CD4-positive, alpha-beta memory T cell (primary cell): ENCODE measurements at regions of chr15 and their contacts with region 1.

Region 1: DNA sequence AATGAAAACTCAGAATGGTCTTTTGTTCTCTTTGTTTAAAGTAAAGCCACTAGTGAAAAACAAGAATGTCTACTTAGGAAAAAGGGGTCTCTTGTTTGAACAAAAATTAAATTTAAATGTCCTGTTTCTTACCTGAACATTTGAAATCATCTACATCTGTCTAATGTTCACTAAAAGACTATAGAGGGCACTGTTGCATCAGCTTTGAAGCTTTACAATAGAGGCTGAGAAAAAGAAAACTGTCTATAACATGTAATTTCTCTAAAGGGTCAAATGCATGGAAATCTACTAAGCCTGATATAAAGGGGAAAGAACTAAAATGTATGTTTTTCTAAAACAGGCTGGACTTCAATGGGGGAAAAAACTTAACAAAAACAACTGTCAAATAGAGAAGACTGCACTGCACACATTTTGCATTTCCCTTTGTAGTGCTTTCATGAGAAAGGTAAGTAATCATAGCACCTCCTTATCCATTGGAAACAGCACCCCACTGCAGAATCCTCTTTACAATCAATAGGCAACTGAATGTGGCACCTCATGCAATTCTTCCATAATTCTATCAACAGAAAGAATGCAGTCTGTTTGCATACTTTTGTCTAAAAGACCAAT is 26.3 kb downstream of the DPH6 start:
- DNase-seq: peak in 4 of 5 donors; percentile 29 to 36 (median 33)
- H3K4me3 ChIP-seq: no peak overlapping the region
- H3K4me3 Mint-ChIP-seq: no peak overlapping the region
- H3K27ac ChIP-seq: no peak overlapping the region
- H3K27ac Mint-ChIP-seq: no peak overlapping the region
- H3K4me1 ChIP-seq: no peaks in the 10 kb centered on the region
- H3K4me1 Mint-ChIP-seq: peaks cover 0 to 8% (median 4%) of the 10 kb centered on the region in 4 donors
- H3K27me3 ChIP-seq: no peaks in the 10 kb centered on the region
- H3K27me3 Mint-ChIP-seq: no peaks in the 10 kb centered on the region

Region 2: GRCh38 chr15:35410774-35411173 is 108.9 kb before region 1 on chr15:
- CTCF ChIA-PET with region 1: no interaction called
- POLR2A ChIA-PET with region 1: no interaction called
- intact Hi-C with region 1: no loop called
- DNase-seq: no peak
- H3K4me3 ChIP-seq: no peak overlapping the region
- H3K4me3 Mint-ChIP-seq: no peak overlapping the region
- H3K27ac ChIP-seq: no peak overlapping the region
- H3K27ac Mint-ChIP-seq: no peak overlapping the region
- H3K4me1 ChIP-seq: no peaks in the 10 kb centered on the region
- H3K4me1 Mint-ChIP-seq: no peaks in the 10 kb centered on the region
- H3K27me3 ChIP-seq: no peaks in the 10 kb centered on the region
- H3K27me3 Mint-ChIP-seq: no peaks in the 10 kb centered on the region

Region 3: DNA sequence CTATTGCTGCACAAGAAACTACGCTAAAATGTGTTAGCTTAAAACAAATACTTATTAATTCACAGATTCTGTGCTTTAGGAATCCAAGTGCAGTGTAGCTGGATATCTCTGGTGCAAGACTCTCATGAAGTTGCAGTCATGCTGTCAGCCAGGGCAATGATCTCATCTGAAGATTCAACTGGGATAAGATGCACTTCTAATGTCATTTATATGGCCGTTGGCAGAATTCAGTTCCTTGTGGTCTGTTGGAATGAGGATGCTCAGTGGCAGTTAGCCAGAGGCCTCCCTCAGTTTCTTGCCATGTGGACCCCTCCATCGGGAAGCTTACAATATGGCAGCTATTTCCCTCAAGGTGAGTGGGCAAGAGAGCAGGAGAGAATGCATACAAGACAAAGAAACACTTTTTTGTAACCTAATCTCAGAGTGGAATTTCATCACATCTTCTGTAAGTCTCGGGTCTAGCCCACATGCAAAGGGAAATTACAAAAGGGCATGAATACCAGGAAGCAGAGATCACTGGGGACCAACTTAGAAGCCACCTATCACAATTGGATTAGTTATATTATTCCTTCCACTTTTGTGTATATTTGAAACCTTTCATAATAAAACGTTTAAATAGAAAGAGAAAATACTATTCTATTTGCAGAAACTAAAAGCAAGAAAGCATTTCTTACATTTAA is 35.2 kb before region 1 on chr15:
- CTCF ChIA-PET with region 1: no interaction called
- POLR2A ChIA-PET with region 1: no interaction called
- intact Hi-C with region 1: no loop called
- DNase-seq: no peak
- H3K4me3 ChIP-seq: no peak overlapping the region
- H3K4me3 Mint-ChIP-seq: no peak overlapping the region
- H3K27ac ChIP-seq: no peak overlapping the region
- H3K27ac Mint-ChIP-seq: no peak overlapping the region
- H3K4me1 ChIP-seq: no peaks in the 10 kb centered on the region
- H3K4me1 Mint-ChIP-seq: peaks cover 0 to 4% (median 2%) of the 10 kb centered on the region in 4 donors
- H3K27me3 ChIP-seq: no peaks in the 10 kb centered on the region
- H3K27me3 Mint-ChIP-seq: no peaks in the 10 kb centered on the region

Region 4: GRCh38 chr15:35751413-35752133 is 231.9 kb after region 1 on chr15:
- CTCF ChIA-PET with region 1: no interaction called
- POLR2A ChIA-PET with region 1: no interaction called
- intact Hi-C with region 1: loop called (anchors 2 kb)
- DNase-seq: peak; percentile 2 to 38 (median 9)
- H3K4me3 ChIP-seq: no peak overlapping the region
- H3K4me3 Mint-ChIP-seq: no peak overlapping the region
- H3K27ac ChIP-seq: no peak overlapping the region
- H3K27ac Mint-ChIP-seq: no peak overlapping the region
- H3K4me1 ChIP-seq: no peaks in the 10 kb centered on the region
- H3K4me1 Mint-ChIP-seq: peaks cover 0 to 2% (median 0%) of the 10 kb centered on the region in 4 donors
- H3K27me3 ChIP-seq: no peaks in the 10 kb centered on the region
- H3K27me3 Mint-ChIP-seq: peaks cover 0 to 5% of the 10 kb centered on the region in 2 donors

Region 5: GRCh38 chr15:37134699-37135131 is 1615.1 kb after region 1 on chr15:
- CTCF ChIA-PET with region 1: no interaction called
- POLR2A ChIA-PET with region 1: no interaction called
- intact Hi-C with region 1: loop called (anchors 1 kb)
- DNase-seq: no peak
- H3K4me3 ChIP-seq: no peak overlapping the region
- H3K4me3 Mint-ChIP-seq: no peak overlapping the region
- H3K27ac ChIP-seq: no peak overlapping the region
- H3K27ac Mint-ChIP-seq: no peak overlapping the region
- H3K4me1 ChIP-seq: no peaks in the 10 kb centered on the region
- H3K4me1 Mint-ChIP-seq: no peaks in the 10 kb centered on the region
- H3K27me3 ChIP-seq: no peaks in the 10 kb centered on the region
- H3K27me3 Mint-ChIP-seq: peaks cover 0 to 10% of the 10 kb centered on the region in 2 donors